GM10248 (cell line): ENCODE measurements at regions of chr1 and their contacts with region 1.

Region 1: GRCh38 chr1:165871311-165872067 is 44.1 kb downstream of the UCK2 start:
- DNase-seq: peak; percentile 45
- CTCF ChIP-seq: peak; percentile 63

Region 2: GRCh38 chr1:165827268-165828102 is 44.0 kb before region 1 on chr1 and contains the start of gene UCK2:
- CTCF ChIA-PET with region 1: interaction called, 11 read pairs
- POLR2A ChIA-PET with region 1: no interaction called
- DNase-seq: peak; percentile 89
- CTCF ChIP-seq: peak; percentile 34

Region 3: DNA sequence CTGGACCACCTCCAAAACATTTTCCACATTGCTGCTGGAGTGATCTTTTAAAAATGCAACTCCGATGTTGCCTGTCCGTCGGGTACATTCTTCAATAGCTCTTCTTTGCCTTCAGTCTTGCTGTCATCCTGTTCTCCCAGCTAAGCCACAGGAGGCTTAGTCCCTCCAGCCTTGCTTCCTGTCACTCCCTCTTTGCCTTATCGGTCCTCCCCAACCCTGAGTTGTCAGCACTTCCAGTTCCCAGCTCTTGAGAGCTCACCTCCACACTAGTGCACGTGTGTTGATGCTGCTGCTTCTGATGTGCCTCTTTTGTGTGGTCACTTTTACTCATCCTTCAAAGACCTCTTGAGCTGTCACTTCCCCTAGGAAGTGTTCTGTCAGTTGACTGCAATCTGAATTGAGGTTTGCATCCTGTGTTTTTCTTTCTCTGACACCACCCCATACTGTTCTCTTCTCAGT is 28.8 kb before region 1 on chr1:
- CTCF ChIA-PET with region 1: interaction called, 11 read pairs
- POLR2A ChIA-PET with region 1: no interaction called
- DNase-seq: no peak
- CTCF ChIP-seq: no peak

Region 4: GRCh38 chr1:165857046-165857801 is 14.3 kb before region 1 on chr1:
- CTCF ChIA-PET with region 1: interaction called, 13 read pairs
- POLR2A ChIA-PET with region 1: no interaction called
- DNase-seq: peak; percentile 70
- CTCF ChIP-seq: no peak

Region 5: DNA sequence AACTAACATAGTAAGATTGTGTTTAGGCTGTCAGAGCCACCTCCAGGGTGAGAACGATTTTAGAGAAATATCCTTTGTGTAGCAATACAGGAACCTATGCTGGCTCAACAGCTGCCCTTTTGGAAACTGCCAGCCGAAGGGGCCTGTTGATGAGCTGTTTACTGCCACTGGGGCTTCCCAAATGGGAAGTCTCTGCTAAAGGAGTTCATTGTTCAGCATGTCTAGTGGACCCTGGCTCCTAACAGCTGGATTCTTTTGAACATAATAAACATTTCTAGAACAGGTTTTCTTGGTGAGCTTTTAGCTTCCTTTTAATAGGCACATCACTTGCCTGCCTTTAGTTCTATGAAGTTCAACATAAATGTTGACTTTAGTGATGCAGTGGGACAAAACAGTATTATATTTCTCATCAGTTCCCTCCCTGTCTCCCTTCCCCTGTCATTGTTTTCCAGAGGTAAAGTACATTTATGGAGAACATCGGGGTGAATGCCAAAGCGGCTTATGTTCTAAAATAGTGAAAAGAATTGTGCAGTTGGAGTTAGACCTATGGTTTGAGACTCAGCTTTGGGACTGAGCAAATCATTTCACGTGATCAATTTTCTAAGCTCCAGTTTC is 13.3 kb after region 1 on chr1:
- CTCF ChIA-PET with region 1: interaction called, 25 read pairs
- POLR2A ChIA-PET with region 1: no interaction called
- DNase-seq: no peak
- CTCF ChIP-seq: no peak

Region 6: GRCh38 chr1:166083887-166084286 is 212.4 kb after region 1 on chr1:
- CTCF ChIA-PET with region 1: no interaction called
- POLR2A ChIA-PET with region 1: no interaction called
- DNase-seq: no peak
- CTCF ChIP-seq: no peak